Naive thymus-derived CD4-positive, alpha-beta T cell (primary cell): ENCODE measurements at regions of chr5 and their contacts with region 1.

Region 1: GRCh38 chr5:86968301-86968753 is 299.4 kb upstream of the RASA1 start:
- DNase-seq: peak in 5 of 9 donors; percentile 10 to 29 (median 19)
- ATAC-seq: no peak
- H3K4me3 ChIP-seq: no peak overlapping the region
- H3K4me3 Mint-ChIP-seq: no peak overlapping the region
- H3K27ac ChIP-seq: no peak overlapping the region
- H3K27ac Mint-ChIP-seq: peak overlapping the region in 1 of 9 donors; percentile 7
- H3K4me1 ChIP-seq: no peaks in the 10 kb centered on the region
- H3K4me1 Mint-ChIP-seq: peaks cover 0 to 10% (median 6%) of the 10 kb centered on the region in 7 donors
- H3K27me3 ChIP-seq: no peaks in the 10 kb centered on the region
- H3K27me3 Mint-ChIP-seq: peaks cover 0 to 44% (median 11%) of the 10 kb centered on the region in 5 donors

Region 2: DNA sequence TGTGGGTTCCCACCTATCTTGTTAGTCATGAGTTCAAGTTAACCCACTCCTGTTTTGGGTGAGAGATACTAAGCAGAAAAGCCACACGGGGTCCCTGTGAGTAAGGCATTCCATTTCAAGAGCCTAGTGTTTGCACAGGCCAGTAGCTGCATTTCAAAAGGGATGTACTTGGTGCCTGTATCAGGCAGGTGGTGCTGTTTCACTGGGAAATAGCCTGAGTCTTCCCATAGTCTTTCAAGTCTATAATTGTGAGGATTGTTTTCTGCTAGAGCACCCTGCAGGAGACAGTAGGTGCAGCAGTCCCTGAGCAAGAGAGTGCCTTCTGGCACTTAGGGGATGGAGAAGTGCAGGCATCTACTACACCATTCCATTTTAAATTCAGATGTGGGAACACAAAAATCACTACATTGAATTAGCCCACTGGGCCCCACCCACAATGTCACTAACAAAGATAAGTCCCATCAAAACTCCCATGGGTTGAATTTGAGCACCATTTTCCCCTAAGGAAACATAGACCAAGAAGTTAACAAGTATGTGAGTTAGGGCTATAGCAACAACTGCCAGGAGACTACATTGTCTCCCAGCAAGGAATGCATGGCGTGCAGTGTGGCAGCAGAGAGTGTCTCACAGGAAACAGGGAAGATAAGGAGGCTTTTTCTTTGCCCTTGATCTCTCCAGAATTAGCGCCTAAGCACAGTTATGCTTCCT is 87.4 kb before region 1 on chr5:
- CTCF ChIA-PET with region 1: no interaction called
- POLR2A ChIA-PET with region 1: no interaction called
- intact Hi-C with region 1: loop called (anchors 1 to 2 kb)
- DNase-seq: peak in 8 of 9 donors; percentile 11 to 45 (median 28)
- ATAC-seq: peak; percentile 86
- H3K4me3 ChIP-seq: no peak overlapping the region
- H3K4me3 Mint-ChIP-seq: no peak overlapping the region
- H3K27ac ChIP-seq: no peak overlapping the region
- H3K27ac Mint-ChIP-seq: no peak overlapping the region
- H3K4me1 ChIP-seq: no peaks in the 10 kb centered on the region
- H3K4me1 Mint-ChIP-seq: no peaks in the 10 kb centered on the region
- H3K27me3 ChIP-seq: no peaks in the 10 kb centered on the region
- H3K27me3 Mint-ChIP-seq: peaks cover 0 to 19% (median 7%) of the 10 kb centered on the region in 5 donors

Region 3: DNA sequence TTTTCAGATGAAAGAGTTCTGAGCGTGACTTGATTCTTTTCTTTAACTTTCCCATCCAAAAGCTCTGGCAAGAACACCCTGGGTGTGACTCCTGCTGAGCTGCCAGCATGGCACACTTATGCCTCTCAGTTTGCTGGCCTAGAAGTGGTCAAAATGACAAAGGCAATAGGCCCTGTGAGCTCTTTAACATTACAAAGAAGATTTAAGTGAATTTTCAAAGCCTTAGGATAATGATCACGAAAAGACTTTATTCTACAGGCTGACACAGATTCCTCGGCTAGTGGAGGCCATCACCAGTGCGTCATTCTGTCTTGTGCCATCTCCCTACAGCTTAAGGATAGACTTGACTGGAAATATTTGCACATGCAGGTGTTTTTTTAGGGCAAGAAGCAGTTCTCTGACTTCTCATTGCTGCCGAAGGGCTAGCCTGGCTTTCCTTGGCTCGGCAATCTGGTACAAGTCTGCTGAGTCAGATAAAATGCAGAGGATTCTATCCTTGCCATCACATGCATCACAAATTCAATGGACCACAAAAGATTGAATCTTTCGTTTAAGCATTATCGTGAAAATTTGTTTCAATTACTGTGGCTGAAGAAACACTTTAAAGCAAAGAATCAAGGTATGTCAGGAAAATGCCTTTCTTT is 39.1 kb before region 1 on chr5:
- CTCF ChIA-PET with region 1: no interaction called
- POLR2A ChIA-PET with region 1: no interaction called
- intact Hi-C with region 1: no loop called
- DNase-seq: no peak
- ATAC-seq: no peak
- H3K4me3 ChIP-seq: no peak overlapping the region
- H3K4me3 Mint-ChIP-seq: no peak overlapping the region
- H3K27ac ChIP-seq: no peak overlapping the region
- H3K27ac Mint-ChIP-seq: no peak overlapping the region
- H3K4me1 ChIP-seq: no peaks in the 10 kb centered on the region
- H3K4me1 Mint-ChIP-seq: no peaks in the 10 kb centered on the region
- H3K27me3 ChIP-seq: no peaks in the 10 kb centered on the region
- H3K27me3 Mint-ChIP-seq: peaks cover 20 to 52% (median 34%) of the 10 kb centered on the region in 5 donors

Region 4: GRCh38 chr5:86997516-86997915 is 29.2 kb after region 1 on chr5:
- CTCF ChIA-PET with region 1: no interaction called
- POLR2A ChIA-PET with region 1: no interaction called
- intact Hi-C with region 1: no loop called
- DNase-seq: no peak
- ATAC-seq: no peak
- H3K4me3 ChIP-seq: no peak overlapping the region
- H3K4me3 Mint-ChIP-seq: no peak overlapping the region
- H3K27ac ChIP-seq: no peak overlapping the region
- H3K27ac Mint-ChIP-seq: no peak overlapping the region
- H3K4me1 ChIP-seq: no peaks in the 10 kb centered on the region
- H3K4me1 Mint-ChIP-seq: no peaks in the 10 kb centered on the region
- H3K27me3 ChIP-seq: no peaks in the 10 kb centered on the region
- H3K27me3 Mint-ChIP-seq: peaks cover 0 to 21% (median 10%) of the 10 kb centered on the region in 5 donors

Region 5: GRCh38 chr5:87008751-87009560 is 40.6 kb after region 1 on chr5:
- CTCF ChIA-PET with region 1: interaction called, 3 read pairs
- POLR2A ChIA-PET with region 1: no interaction called
- intact Hi-C with region 1: loop called in 1 of 2 experiments (anchors 5 kb)
- DNase-seq: no peak
- ATAC-seq: no peak
- H3K4me3 ChIP-seq: no peak overlapping the region
- H3K4me3 Mint-ChIP-seq: no peak overlapping the region
- H3K27ac ChIP-seq: no peak overlapping the region
- H3K27ac Mint-ChIP-seq: no peak overlapping the region
- H3K4me1 ChIP-seq: no peaks in the 10 kb centered on the region
- H3K4me1 Mint-ChIP-seq: no peaks in the 10 kb centered on the region
- H3K27me3 ChIP-seq: no peaks in the 10 kb centered on the region
- H3K27me3 Mint-ChIP-seq: peaks cover 0 to 20% (median 0%) of the 10 kb centered on the region in 5 donors